CD4-positive, alpha-beta T cell (primary cell): ENCODE measurements at regions of chrX and their contacts with region 1.

Region 1: DNA sequence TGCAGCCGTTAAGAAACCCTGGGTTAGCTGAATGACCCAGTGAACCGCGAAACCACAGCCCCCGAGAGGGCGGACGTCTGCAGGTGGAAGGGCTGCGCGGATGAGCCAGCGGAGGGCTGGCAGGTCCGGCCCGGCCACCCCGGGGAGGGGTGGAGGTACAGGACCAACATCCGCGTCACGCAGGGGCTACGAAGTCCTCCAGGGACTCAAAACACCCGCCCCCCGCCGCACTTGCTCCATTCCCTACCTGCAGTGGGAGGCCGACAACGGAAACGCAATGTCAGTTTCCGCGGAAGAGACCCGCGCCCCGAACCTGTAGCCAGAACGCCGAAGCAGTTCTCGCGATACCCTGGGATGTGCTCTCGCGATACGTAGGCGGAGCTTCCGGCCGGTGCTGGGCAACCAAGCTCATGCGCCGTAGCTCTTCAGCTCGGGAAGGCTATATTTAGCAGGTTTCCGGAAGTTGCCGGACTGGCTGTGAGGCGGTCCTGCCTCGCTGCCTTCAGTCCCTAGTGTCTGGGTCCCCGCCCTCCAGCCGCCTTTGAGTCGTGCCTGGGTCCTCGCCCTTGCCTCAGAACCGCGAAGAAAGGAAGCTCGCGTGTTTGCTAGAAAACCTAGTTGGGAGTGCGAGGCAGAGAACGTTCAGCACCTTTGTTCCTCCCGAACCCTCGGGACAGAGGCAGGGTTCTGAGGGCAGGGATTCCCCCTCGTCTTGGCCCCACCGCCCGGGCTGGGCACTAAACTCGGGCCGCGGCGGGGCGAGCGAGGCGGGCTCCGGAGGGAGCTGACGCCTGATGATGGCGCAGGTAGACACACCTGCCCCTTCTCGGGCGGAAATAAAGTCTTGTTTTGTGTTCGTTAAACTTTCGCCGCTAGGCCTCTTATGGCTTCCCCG is at the starts of genes OFD1 and TRAPPC2:
- DNase-seq: peak; percentile 81 to 95 (median 87)
- ATAC-seq: peak; percentile 86
- H3K4me3 ChIP-seq: peak within 1 kb of the TSS; percentile 92
- H3K4me3 Mint-ChIP-seq: peak within 1 kb of the TSS; percentile 99
- H3K27ac ChIP-seq: peak within 1 kb of the TSS; percentile 96 to 99
- H3K27ac Mint-ChIP-seq: peak within 1 kb of the TSS; percentile 100
- H3K4me1 ChIP-seq: peaks cover 19% of the 10 kb centered on the region
- H3K4me1 Mint-ChIP-seq: peaks cover 56% of the 10 kb centered on the region
- H3K27me3 ChIP-seq: no peaks in the 10 kb centered on the region
- H3K27me3 Mint-ChIP-seq: no peaks in the 10 kb centered on the region
- CTCF ChIP-seq: no peak
- total RNA-seq, gene OFD1: 59.1 to 60.0 TPM
- total RNA-seq, gene TRAPPC2: 21.4 to 22.3 TPM

Region 2: GRCh38 chrX:13346646-13347045 is 387.9 kb before region 1 on chrX:
- CTCF ChIA-PET with region 1: no interaction called
- POLR2A ChIA-PET with region 1: no interaction called
- intact Hi-C with region 1: no loop called
- DNase-seq: no peak
- ATAC-seq: no peak
- H3K4me3 ChIP-seq: no peak overlapping the region
- H3K4me3 Mint-ChIP-seq: no peak overlapping the region
- H3K27ac ChIP-seq: no peak overlapping the region
- H3K27ac Mint-ChIP-seq: no peak overlapping the region
- H3K4me1 ChIP-seq: no peaks in the 10 kb centered on the region
- H3K4me1 Mint-ChIP-seq: no peaks in the 10 kb centered on the region
- H3K27me3 ChIP-seq: no peaks in the 10 kb centered on the region
- H3K27me3 Mint-ChIP-seq: no peaks in the 10 kb centered on the region
- CTCF ChIP-seq: no peak

Region 3: GRCh38 chrX:13688958-13689740 is 45.4 kb before region 1 on chrX and contains the start of gene RAB9A:
- CTCF ChIA-PET with region 1: interaction called, 5 read pairs
- POLR2A ChIA-PET with region 1: interaction called, 64 read pairs
- intact Hi-C with region 1: loop called in 1 of 2 experiments (anchors 5 kb)
- DNase-seq: peak; percentile 59 to 87 (median 72)
- ATAC-seq: peak; percentile 88
- H3K4me3 ChIP-seq: peak within 1 kb of the TSS; percentile 81
- H3K4me3 Mint-ChIP-seq: peak within 1 kb of the TSS; percentile 95
- H3K27ac ChIP-seq: peak within 1 kb of the TSS; percentile 70 to 86
- H3K27ac Mint-ChIP-seq: peak within 1 kb of the TSS; percentile 93
- H3K4me1 ChIP-seq: peaks cover 29% of the 10 kb centered on the region
- H3K4me1 Mint-ChIP-seq: peaks cover 57% of the 10 kb centered on the region
- H3K27me3 ChIP-seq: no peaks in the 10 kb centered on the region
- H3K27me3 Mint-ChIP-seq: no peaks in the 10 kb centered on the region
- CTCF ChIP-seq: no peak
- total RNA-seq, gene RAB9A: 21.4 to 25.2 TPM

Region 4: GRCh38 chrX:13699183-13699826 is 35.2 kb before region 1 on chrX:
- CTCF ChIA-PET with region 1: interaction called, 3 read pairs
- POLR2A ChIA-PET with region 1: interaction called, 7 read pairs
- intact Hi-C with region 1: loop called (anchors 5 kb)
- DNase-seq: no peak
- ATAC-seq: no peak
- H3K4me3 ChIP-seq: no peak overlapping the region
- H3K4me3 Mint-ChIP-seq: no peak overlapping the region
- H3K27ac ChIP-seq: no peak overlapping the region
- H3K27ac Mint-ChIP-seq: peak overlapping the region; percentile 0
- H3K4me1 ChIP-seq: peaks cover 28% of the 10 kb centered on the region
- H3K4me1 Mint-ChIP-seq: peaks cover 82% of the 10 kb centered on the region
- H3K27me3 ChIP-seq: no peaks in the 10 kb centered on the region
- H3K27me3 Mint-ChIP-seq: no peaks in the 10 kb centered on the region
- CTCF ChIP-seq: no peak

Region 5: GRCh38 chrX:13721819-13722519 is 12.6 kb before region 1 on chrX:
- CTCF ChIA-PET with region 1: interaction called, 5 read pairs
- POLR2A ChIA-PET with region 1: interaction called, 105 read pairs
- intact Hi-C with region 1: no loop called
- DNase-seq: no peak
- ATAC-seq: no peak
- H3K4me3 ChIP-seq: no peak overlapping the region
- H3K4me3 Mint-ChIP-seq: no peak overlapping the region
- H3K27ac ChIP-seq: no peak overlapping the region
- H3K27ac Mint-ChIP-seq: peak overlapping the region; percentile 58
- H3K4me1 ChIP-seq: peaks cover 38% of the 10 kb centered on the region
- H3K4me1 Mint-ChIP-seq: peaks cover 71% of the 10 kb centered on the region
- H3K27me3 ChIP-seq: no peaks in the 10 kb centered on the region
- H3K27me3 Mint-ChIP-seq: no peaks in the 10 kb centered on the region
- CTCF ChIP-seq: no peak

Region 6: GRCh38 chrX:13750204-13750603 is 15.7 kb after region 1 on chrX:
- CTCF ChIA-PET with region 1: interaction called, 5 read pairs
- POLR2A ChIA-PET with region 1: interaction called, 12 read pairs
- intact Hi-C with region 1: no loop called
- DNase-seq: peak in 4 of 14 experiments; percentile 15 to 67 (median 60)
- ATAC-seq: peak; percentile 65
- H3K4me3 ChIP-seq: no peak overlapping the region
- H3K4me3 Mint-ChIP-seq: no peak overlapping the region
- H3K27ac ChIP-seq: no peak overlapping the region
- H3K27ac Mint-ChIP-seq: peak overlapping the region; percentile 6
- H3K4me1 ChIP-seq: peaks cover 3% of the 10 kb centered on the region
- H3K4me1 Mint-ChIP-seq: peaks cover 28% of the 10 kb centered on the region
- H3K27me3 ChIP-seq: no peaks in the 10 kb centered on the region
- H3K27me3 Mint-ChIP-seq: no peaks in the 10 kb centered on the region
- CTCF ChIP-seq: peak; percentile 62

Region 7: DNA sequence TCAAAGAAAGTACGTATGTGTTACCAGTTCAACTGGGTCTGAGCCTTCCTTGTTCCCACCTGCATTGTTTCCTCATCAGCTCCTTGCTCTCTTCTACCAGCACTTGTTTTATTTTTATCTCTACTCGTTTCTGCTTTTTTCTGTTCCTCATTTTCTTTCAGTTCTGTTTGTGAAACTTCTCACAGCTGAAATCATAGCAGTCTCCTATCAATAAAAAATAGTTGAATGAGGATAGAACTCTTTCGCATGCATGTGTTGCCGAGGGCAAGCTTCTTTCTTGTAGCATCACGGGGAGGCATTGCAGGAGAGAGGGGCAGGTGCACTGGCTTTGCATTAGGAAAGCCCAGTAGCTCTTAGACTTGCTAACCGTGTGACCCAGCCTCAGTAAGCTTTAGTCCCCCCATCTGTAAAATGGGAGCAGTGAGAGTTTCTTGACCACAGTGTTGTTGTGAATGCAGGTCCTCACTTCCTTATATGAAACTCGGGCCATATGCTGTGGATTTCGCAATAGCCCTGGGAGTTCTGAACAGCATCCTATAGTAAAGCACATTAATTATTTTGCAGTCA is 24.7 kb after region 1 on chrX:
- CTCF ChIA-PET with region 1: no interaction called
- POLR2A ChIA-PET with region 1: interaction called, 10 read pairs
- intact Hi-C with region 1: no loop called
- DNase-seq: no peak
- ATAC-seq: no peak
- H3K4me3 ChIP-seq: no peak overlapping the region
- H3K4me3 Mint-ChIP-seq: no peak overlapping the region
- H3K27ac ChIP-seq: no peak overlapping the region
- H3K27ac Mint-ChIP-seq: no peak overlapping the region
- H3K4me1 ChIP-seq: no peaks in the 10 kb centered on the region
- H3K4me1 Mint-ChIP-seq: peaks cover 10% of the 10 kb centered on the region
- H3K27me3 ChIP-seq: no peaks in the 10 kb centered on the region
- H3K27me3 Mint-ChIP-seq: no peaks in the 10 kb centered on the region
- CTCF ChIP-seq: no peak

Region 8: DNA sequence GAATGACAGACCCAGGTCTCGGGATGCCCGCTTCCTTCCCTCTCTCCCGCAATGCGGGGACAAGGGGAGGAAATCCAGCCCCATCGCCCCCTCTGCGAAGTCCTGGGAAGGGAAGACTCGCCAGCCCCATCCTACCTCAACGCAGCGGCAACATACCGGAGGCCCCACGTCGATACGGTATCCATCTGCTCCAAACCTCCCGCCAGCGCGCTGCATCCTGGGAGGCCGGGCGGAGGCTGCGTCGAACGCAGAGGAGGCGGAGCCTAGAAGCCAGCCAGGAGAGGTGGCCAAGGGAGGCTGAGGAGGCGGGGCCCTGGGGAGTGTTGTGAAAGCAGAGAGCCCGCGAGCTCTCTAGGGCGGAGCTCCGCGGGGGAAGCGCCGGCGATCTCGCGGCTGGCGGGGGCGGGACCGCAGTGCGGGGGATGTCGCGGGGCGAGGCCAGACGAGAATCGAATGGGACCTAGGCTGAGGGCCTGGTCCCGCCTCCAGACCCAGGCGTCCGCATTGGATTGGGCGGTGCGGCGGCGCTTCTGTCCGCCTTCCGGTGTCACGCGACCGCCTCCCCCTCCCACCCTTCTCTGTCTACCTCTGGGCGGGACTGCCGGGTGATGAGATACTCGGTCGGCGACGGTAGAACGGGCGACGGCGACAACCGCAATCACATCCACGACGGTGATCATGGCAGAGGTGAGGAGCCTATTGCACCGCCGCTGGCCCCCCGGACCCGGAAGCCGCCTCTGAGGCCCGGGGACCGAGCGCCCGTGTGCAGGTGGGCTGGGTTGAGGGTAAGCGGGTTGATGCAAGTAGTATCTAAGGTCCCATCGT is 1138.5 kb after region 1 on chrX and contains the starts of genes FANCB and MOSPD2:
- CTCF ChIA-PET with region 1: no interaction called
- POLR2A ChIA-PET with region 1: no interaction called
- intact Hi-C with region 1: no loop called
- DNase-seq: peak; percentile 82 to 97 (median 92)
- ATAC-seq: peak; percentile 89
- H3K4me3 ChIP-seq: peak within 1 kb of the TSS; percentile 85
- H3K4me3 Mint-ChIP-seq: peak within 1 kb of the TSS; percentile 93
- H3K27ac ChIP-seq: peak within 1 kb of the TSS; percentile 71 to 72
- H3K27ac Mint-ChIP-seq: peak within 1 kb of the TSS; percentile 91
- H3K4me1 ChIP-seq: peaks cover 7% of the 10 kb centered on the region
- H3K4me1 Mint-ChIP-seq: peaks cover 8% of the 10 kb centered on the region
- H3K27me3 ChIP-seq: no peaks in the 10 kb centered on the region
- H3K27me3 Mint-ChIP-seq: no peaks in the 10 kb centered on the region
- CTCF ChIP-seq: no peak
- total RNA-seq, gene FANCB: 1.5 to 1.6 TPM
- total RNA-seq, gene MOSPD2: 6.4 to 6.8 TPM